ENCODE measurements at regions of chr15 and their contacts with region 1.

Region 1: DNA sequence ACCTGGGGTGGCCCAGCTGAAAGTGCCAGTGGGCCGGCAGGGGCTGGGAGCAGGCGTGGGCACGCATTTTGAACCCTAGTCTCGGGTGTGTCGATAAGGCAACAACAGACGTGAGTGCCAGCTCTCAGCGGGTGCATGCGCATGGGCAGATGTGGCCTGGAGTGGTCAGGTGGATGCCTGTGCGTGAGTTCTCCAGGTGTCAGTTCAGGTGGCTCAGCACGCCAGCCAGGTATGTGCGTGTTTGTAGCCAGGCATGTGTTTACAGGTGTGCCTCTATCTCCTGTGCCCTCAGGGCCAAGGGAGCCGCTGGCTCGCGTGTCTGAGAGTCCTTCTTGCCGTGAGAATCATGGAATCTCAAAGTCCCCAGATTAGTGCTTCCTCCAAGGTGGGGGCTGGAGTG is 14.8 kb downstream of the CYP1A2 start:
- DNase-seq: no peak
- H3K4me3 ChIP-seq: no peak overlapping the region
- H3K27ac ChIP-seq: no peak overlapping the region
- H3K4me1 ChIP-seq: peaks cover 0 to 8% (median 3%) of the 10 kb centered on the region in 4 experiments; a peak in 4 of 7 replicates
- H3K27me3 ChIP-seq: no peaks in the 10 kb centered on the region; a peak in 1 of 7 replicates
- CTCF ChIP-seq: no peak
- EP300 ChIP-seq: no peak
- POLR2A ChIP-seq: no peak
- RAD21 ChIP-seq: no peak

Region 2: GRCh38 chr15:74615508-74616365 is 147.7 kb before region 1 on chr15 and contains the start of gene CLK3:
- CTCF ChIA-PET with region 1: interaction called, 1,439 read pairs
- POLR2A ChIA-PET with region 1: interaction called, 22 read pairs
- DNase-seq: peak; percentile 79 to 98
- H3K4me3 ChIP-seq: peak within 1 kb of the TSS; percentile 80 to 96 (median 84)
- H3K27ac ChIP-seq: peak within 1 kb of the TSS; percentile 68
- H3K4me1 ChIP-seq: peaks cover 0 to 5% (median 2%) of the 10 kb centered on the region in 4 experiments; a peak in 5 of 7 replicates
- H3K27me3 ChIP-seq: peaks cover 0 to 15% (median 11%) of the 10 kb centered on the region in 4 experiments; a peak in 4 of 7 replicates
- CTCF ChIP-seq: peak in 1 of 3 experiments; percentile 11; a peak in 1 of 4 replicates
- EP300 ChIP-seq: 0 out of 3 replicates have a peak, but pooled peaks of 1 of the 2 experiments have one; percentile 17
- POLR2A ChIP-seq: peak in 1 of 2 experiments; percentile 85; a peak in 2 of 3 replicates
- RAD21 ChIP-seq: peak in 1 of 2 experiments; percentile 14; a peak in 1 of 4 replicates
- total RNA-seq, gene CLK3: 42.4 and 43.5 TPM in 2 replicates

Region 3: DNA sequence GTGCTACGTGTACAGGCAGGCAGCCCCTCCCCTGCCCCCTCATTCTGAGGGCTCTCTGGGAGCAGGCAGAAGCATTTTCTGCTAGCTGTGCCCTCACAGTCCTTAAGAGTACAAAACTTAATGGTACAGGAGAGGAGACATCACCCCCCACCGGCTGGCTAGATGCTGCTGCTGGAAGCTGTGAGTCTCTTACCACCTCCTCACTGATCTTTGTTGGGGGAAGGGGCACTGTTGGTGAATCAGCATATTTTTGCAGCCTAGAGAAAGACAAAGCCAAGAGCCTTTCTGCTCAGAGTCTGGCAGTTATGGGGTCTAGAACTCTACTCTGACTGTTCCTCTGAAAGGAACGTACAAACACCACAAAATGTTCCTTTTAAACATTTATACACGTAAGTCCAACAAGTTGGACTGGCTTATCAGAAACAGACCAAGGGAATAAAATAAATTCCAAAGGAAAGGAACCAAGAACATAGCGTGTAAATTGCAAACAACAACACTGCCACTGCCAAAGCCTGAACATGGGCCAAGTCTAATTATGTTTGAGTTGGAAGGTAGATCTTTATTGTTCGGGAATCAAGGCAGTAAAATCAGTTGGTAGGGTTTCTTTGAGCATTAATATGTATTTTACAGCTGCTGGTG is 120.6 kb before region 1 on chr15:
- CTCF ChIA-PET with region 1: interaction called, 1,439 read pairs
- POLR2A ChIA-PET with region 1: interaction called, 32 read pairs
- DNase-seq: no peak
- H3K4me3 ChIP-seq: peak overlapping the region in 1 of 4 experiments; percentile 23; a peak in 1 of 8 replicates
- H3K27ac ChIP-seq: peak overlapping the region; percentile 78
- H3K4me1 ChIP-seq: peaks cover 0 to 13% (median 11%) of the 10 kb centered on the region in 4 experiments; a peak in 4 of 7 replicates
- H3K27me3 ChIP-seq: no peaks in the 10 kb centered on the region
- CTCF ChIP-seq: no peak
- EP300 ChIP-seq: no peak
- POLR2A ChIP-seq: no peak
- RAD21 ChIP-seq: 0 out of 4 replicates have a peak, but pooled peaks of 1 of the 2 experiments have one; percentile 7

Region 4: GRCh38 chr15:74730619-74731316 is 32.6 kb before region 1 on chr15:
- CTCF ChIA-PET with region 1: interaction called, 39 read pairs
- POLR2A ChIA-PET with region 1: interaction called, 46 read pairs
- DNase-seq: no peak
- H3K4me3 ChIP-seq: no peak overlapping the region
- H3K27ac ChIP-seq: no peak overlapping the region
- H3K4me1 ChIP-seq: peaks cover 0 to 2% (median 0%) of the 10 kb centered on the region in 4 experiments; a peak in 2 of 7 replicates
- H3K27me3 ChIP-seq: peaks cover 12 to 21% (median 17%) of the 10 kb centered on the region in 4 experiments
- CTCF ChIP-seq: no peak
- EP300 ChIP-seq: no peak
- POLR2A ChIP-seq: no peak
- RAD21 ChIP-seq: no peak

Region 5: DNA sequence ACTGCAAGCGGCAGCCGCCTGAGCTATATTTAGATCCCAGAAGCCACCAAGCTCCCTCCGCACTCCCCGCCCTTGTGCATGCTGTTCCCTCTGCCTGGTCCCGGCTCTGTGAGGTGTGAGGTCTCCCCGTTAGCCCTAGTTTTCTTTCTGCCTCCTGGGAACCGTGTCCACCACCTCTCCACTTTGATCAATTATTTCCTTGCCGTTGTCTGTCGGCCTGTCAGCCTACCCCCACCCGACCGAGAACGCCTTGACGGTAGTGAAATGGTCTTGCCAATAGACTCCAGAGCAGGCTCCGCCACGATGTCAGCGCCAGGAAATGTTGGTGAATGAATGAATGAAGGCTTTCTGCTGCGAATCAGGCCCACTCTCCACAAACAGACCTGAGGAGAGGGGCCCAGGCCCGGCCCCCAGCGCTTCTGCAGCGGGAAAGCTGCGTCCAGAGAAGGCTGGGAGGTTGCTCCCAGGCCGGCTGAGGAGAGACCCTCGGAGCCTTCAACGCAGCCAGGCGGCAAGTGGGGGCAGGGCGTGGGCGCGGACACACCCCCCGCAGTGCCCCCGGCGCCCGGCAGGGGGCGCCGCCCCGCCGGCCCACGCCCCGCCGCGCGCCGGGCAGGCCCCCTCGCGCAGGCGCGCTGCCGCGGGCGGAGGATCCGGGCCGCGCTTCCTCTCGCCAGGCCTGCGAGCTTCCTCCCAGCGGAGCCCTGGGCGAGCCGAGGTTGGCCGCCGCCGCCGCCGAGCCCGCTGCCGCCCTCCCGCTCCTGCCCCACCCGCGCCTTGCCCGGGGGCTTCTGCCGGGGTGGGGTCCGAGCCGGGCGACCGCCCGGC is 18.2 kb after region 1 on chr15 and contains the start of gene CSK:
- CTCF ChIA-PET with region 1: interaction called, 543 read pairs
- POLR2A ChIA-PET with region 1: interaction called, 18 read pairs
- DNase-seq: peak in 1 of 2 experiments; percentile 79
- H3K4me3 ChIP-seq: peak within 1 kb of the TSS; percentile 55 to 82 (median 60)
- H3K27ac ChIP-seq: no peak within 1 kb of the TSS
- H3K4me1 ChIP-seq: peaks cover 4 to 25% (median 20%) of the 10 kb centered on the region in 4 experiments
- H3K27me3 ChIP-seq: peaks cover 0 to 15% (median 11%) of the 10 kb centered on the region in 4 experiments; a peak in 6 of 7 replicates
- CTCF ChIP-seq: peak; percentile 44 to 72 (median 50)
- EP300 ChIP-seq: no peak
- POLR2A ChIP-seq: no peak
- RAD21 ChIP-seq: no peak; a peak in 1 of 4 replicates
- total RNA-seq, gene CSK: 50.2 and 51.7 TPM in 2 replicates